CD4-positive, alpha-beta memory T cell (primary cell): ENCODE measurements at regions of chr5 and their contacts with region 1.

Region 1: GRCh38 chr5:55982957-55983381 is 11.8 kb downstream of the IL6ST start:
- DNase-seq: peak in 4 of 5 donors; percentile 22 to 34 (median 28)
- H3K4me3 ChIP-seq: no peak overlapping the region
- H3K4me3 Mint-ChIP-seq: peak overlapping the region; percentile 44 to 81 (median 64)
- H3K27ac ChIP-seq: no peak overlapping the region
- H3K27ac Mint-ChIP-seq: peak overlapping the region in 6 of 7 donors; percentile 19 to 86 (median 74)
- H3K4me1 ChIP-seq: peaks cover 90% of the 10 kb centered on the region
- H3K4me1 Mint-ChIP-seq: peaks cover 53 to 86% (median 69%) of the 10 kb centered on the region in 4 donors
- H3K27me3 ChIP-seq: no peaks in the 10 kb centered on the region
- H3K27me3 Mint-ChIP-seq: no peaks in the 10 kb centered on the region

Region 2: GRCh38 chr5:55936100-55936693 is 46.8 kb before region 1 on chr5:
- CTCF ChIA-PET with region 1: interaction called, 11 read pairs
- POLR2A ChIA-PET with region 1: no interaction called
- intact Hi-C with region 1: loop called (anchors 2 kb)
- DNase-seq: peak; percentile 61 to 76 (median 65)
- H3K4me3 ChIP-seq: no peak overlapping the region
- H3K4me3 Mint-ChIP-seq: no peak overlapping the region
- H3K27ac ChIP-seq: no peak overlapping the region
- H3K27ac Mint-ChIP-seq: peak overlapping the region in 4 of 7 donors; percentile 25 to 73 (median 42)
- H3K4me1 ChIP-seq: peaks cover 5% of the 10 kb centered on the region
- H3K4me1 Mint-ChIP-seq: peaks cover 0 to 8% (median 4%) of the 10 kb centered on the region in 4 donors
- H3K27me3 ChIP-seq: no peaks in the 10 kb centered on the region
- H3K27me3 Mint-ChIP-seq: no peaks in the 10 kb centered on the region

Region 3: GRCh38 chr5:56050551-56051255 is 67.7 kb after region 1 on chr5:
- CTCF ChIA-PET with region 1: interaction called, 8 read pairs
- POLR2A ChIA-PET with region 1: interaction called, 3 read pairs
- intact Hi-C with region 1: loop called (anchors 2 kb)
- DNase-seq: peak in 4 of 5 donors; percentile 45 to 62 (median 54)
- H3K4me3 ChIP-seq: no peak overlapping the region
- H3K4me3 Mint-ChIP-seq: peak overlapping the region; percentile 77 to 86 (median 82)
- H3K27ac ChIP-seq: no peak overlapping the region
- H3K27ac Mint-ChIP-seq: peak overlapping the region; percentile 73 to 96 (median 87)
- H3K4me1 ChIP-seq: peaks cover 65% of the 10 kb centered on the region
- H3K4me1 Mint-ChIP-seq: peaks cover 40 to 73% (median 55%) of the 10 kb centered on the region in 4 donors
- H3K27me3 ChIP-seq: no peaks in the 10 kb centered on the region
- H3K27me3 Mint-ChIP-seq: no peaks in the 10 kb centered on the region

Region 4: DNA sequence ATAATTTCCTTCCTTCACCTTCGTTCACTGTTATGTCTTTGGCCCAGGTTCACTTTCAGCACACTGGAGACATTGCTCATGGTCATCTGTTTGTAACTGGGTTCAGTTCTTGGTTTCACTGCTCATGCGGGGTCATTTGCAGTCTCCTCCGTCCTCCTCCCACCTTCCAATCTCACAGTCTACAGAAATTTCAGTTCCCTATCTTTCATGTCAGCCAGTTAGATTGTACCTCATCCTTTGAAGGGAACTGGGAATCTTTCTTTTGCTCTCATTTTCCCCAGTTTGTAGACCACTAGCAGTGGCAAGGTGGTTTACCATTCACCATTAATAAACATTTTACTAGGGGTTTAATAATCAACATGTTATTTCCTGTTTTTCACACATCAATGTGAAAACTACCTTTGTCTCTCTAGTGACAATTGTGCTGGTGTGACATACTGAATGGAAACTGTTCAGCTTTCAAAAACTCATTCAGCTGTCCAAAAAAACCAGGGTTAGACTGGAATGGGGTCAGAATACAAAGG is 112.7 kb after region 1 on chr5:
- CTCF ChIA-PET with region 1: interaction called, 8 read pairs
- POLR2A ChIA-PET with region 1: interaction called, 4 read pairs
- intact Hi-C with region 1: loop called (anchors 2 kb)
- DNase-seq: no peak
- H3K4me3 ChIP-seq: no peak overlapping the region
- H3K4me3 Mint-ChIP-seq: peak overlapping the region in 6 of 8 donors; percentile 1 to 84 (median 12)
- H3K27ac ChIP-seq: no peak overlapping the region
- H3K27ac Mint-ChIP-seq: peak overlapping the region; percentile 23 to 91 (median 73)
- H3K4me1 ChIP-seq: peaks cover 87% of the 10 kb centered on the region
- H3K4me1 Mint-ChIP-seq: peaks cover 55 to 80% (median 66%) of the 10 kb centered on the region in 4 donors
- H3K27me3 ChIP-seq: no peaks in the 10 kb centered on the region
- H3K27me3 Mint-ChIP-seq: no peaks in the 10 kb centered on the region

Region 5: DNA sequence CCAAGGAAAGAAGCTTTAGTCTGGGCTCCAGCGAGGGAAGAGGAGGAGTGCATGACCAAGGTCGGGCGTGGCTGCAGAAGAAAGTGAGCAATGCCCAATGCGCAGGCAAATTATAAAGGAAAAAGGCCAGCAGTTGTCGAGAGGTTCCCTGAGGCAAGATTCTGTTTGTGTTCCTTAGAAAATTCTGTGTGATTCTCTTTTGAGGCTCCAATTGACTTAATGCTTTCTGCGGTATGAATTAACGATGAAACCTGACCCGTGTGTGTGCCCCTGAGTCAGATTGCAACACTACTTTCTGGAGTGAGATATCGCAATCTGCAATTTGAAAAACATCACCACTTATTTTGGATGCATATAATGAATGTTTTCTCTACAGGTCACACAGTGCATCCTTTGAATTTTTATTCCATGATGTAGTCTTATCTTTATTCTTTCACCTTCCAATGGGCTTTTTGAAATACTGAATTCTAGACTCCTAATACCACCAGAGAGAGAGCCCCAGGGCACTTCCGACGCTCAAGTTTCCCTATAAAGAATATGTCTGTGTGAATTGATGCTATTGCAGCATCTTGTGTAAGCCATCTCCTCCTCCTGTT is 129.7 kb after region 1 on chr5:
- CTCF ChIA-PET with region 1: no interaction called
- POLR2A ChIA-PET with region 1: no interaction called
- intact Hi-C with region 1: no loop called
- DNase-seq: no peak
- H3K4me3 ChIP-seq: no peak overlapping the region
- H3K4me3 Mint-ChIP-seq: no peak overlapping the region
- H3K27ac ChIP-seq: no peak overlapping the region
- H3K27ac Mint-ChIP-seq: no peak overlapping the region
- H3K4me1 ChIP-seq: no peaks in the 10 kb centered on the region
- H3K4me1 Mint-ChIP-seq: peaks cover 0 to 9% (median 2%) of the 10 kb centered on the region in 4 donors
- H3K27me3 ChIP-seq: no peaks in the 10 kb centered on the region
- H3K27me3 Mint-ChIP-seq: no peaks in the 10 kb centered on the region